ENCODE measurements at regions of chr1 and their contacts with region 1.

Region 1: DNA sequence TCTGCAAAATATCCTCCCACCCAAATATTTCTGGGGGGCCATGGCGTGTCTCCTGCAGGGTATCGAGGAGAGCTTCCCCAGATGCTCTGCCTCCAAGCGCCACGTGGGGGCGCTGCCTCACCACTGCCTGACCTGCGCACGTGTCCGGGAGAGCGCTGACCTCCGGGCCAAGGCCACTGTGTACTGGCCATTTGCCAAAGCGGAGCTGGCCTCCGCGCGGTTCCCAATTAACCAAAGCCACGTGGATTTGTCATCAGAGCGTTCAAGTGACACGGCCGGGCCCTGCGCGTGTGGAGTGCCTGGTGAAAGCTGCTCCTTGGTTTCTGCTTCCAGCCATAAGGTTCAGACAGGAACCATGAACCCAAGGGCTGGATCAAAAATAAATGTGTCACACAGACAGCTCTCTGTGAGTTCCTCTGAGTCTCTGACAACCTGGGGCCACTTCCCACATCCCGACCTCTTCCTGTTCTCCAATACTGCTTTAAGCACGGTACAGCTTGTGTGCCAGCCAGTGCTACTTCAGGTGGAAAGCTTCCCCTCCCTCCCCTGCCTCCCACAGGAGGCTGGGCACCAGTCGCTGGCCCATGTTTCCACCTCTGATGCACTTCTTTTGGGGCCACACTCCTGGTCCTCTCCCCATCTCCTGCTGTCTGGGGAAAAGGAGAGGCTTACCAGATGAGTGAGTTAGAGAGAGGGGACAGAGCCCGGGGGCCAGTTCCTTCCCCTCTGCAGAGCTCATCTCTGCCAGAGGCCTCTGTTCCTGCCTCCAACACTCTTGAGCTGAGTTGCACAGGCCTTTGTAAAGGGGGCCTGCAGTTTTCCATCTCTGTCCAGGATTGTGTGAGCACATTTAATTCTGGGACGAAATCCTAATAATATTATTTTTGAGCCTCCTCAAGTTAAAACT is 26.1 kb downstream of the ZP4 start:
- DNase-seq: peak; percentile 77
- H3K4me3 Mint-ChIP-seq: peak overlapping the region; percentile 66
- H3K27ac Mint-ChIP-seq: peak overlapping the region; percentile 16
- H3K4me1 Mint-ChIP-seq: peaks cover 9% of the 10 kb centered on the region
- H3K27me3 Mint-ChIP-seq: no peaks in the 10 kb centered on the region
- CTCF ChIP-seq: peak; percentile 100

Region 2: DNA sequence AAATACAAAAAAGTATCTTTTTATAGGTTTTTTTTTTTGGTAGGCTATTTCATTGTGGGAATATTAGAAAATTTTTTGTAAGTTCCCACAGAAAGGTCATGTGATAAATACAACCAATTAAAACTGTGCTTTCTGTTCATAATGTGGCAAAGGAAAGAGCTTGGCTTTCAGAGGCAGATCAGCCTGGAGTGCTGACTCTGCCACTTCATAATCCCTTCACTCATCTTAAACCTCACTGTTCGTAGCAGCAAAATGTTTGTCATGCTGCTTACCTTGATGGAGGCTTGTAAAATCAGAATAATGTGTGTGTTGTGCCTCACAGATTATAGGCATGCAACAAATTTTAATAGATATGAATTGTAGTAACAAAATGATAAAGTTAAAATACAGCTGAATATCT is 150.7 kb before region 1 on chr1:
- CTCF ChIA-PET with region 1: no interaction called
- POLR2A ChIA-PET with region 1: no interaction called
- intact Hi-C with region 1: no loop called
- DNase-seq: peak; percentile 17
- H3K4me3 Mint-ChIP-seq: no peak overlapping the region
- H3K27ac Mint-ChIP-seq: no peak overlapping the region
- H3K4me1 Mint-ChIP-seq: peaks cover 5% of the 10 kb centered on the region
- H3K27me3 Mint-ChIP-seq: no peaks in the 10 kb centered on the region
- CTCF ChIP-seq: no peak

Region 3: DNA sequence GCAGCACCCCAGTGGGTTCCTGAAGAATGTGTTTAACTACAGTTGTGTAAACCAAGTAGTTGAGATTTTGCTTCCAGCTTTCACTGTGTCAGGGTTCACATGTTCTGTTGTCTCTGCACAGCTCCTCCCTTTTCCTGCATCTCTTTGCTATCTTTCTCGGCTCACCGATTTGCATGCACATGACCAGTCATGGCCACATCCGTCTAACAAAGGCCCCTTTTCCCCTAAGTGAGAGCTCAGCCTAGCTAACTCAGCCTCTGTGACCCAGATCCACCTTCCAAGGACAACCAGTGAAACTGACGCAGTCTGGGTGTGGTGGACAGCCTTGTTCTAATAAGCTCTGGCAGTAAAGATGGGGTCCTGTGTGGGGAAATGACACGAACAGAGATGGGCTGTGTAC is 75.0 kb before region 1 on chr1:
- CTCF ChIA-PET with region 1: no interaction called
- POLR2A ChIA-PET with region 1: no interaction called
- intact Hi-C with region 1: no loop called
- DNase-seq: no peak
- H3K4me3 Mint-ChIP-seq: no peak overlapping the region
- H3K27ac Mint-ChIP-seq: no peak overlapping the region
- H3K4me1 Mint-ChIP-seq: no peaks in the 10 kb centered on the region
- H3K27me3 Mint-ChIP-seq: no peaks in the 10 kb centered on the region
- CTCF ChIP-seq: no peak

Region 4: DNA sequence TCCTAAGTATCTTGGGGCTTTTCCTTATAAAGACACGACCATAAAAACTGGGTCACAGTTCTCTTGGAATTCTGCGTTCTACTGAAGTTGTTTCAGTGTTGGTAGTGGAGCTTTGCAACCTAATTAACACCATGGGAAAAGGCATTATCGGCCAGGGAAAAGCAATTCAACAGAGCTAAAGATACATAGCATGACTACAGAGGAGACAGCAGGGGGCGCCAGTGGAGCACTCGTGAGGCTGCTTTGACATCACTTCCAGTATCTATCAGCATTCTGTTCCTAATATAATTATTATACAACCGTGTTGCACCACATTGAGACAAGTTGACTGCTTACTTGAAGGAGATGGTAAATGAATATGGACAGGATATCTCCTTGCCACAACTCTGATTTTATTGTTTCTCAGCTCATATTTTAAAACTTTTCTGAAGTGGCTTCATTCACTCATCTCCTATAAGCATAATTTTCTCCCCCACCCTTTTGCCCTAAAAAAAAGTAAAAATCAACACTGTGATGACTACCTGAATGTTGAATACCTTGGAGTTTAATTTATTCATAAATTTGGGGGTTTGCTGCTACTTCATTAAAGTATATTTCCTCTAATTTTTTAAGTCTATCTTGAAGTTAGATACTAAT is 13.3 kb before region 1 on chr1:
- CTCF ChIA-PET with region 1: interaction called, 162 read pairs
- POLR2A ChIA-PET with region 1: interaction called, 3 read pairs
- intact Hi-C with region 1: no loop called
- DNase-seq: peak; percentile 87
- H3K4me3 Mint-ChIP-seq: no peak overlapping the region
- H3K27ac Mint-ChIP-seq: no peak overlapping the region
- H3K4me1 Mint-ChIP-seq: no peaks in the 10 kb centered on the region
- H3K27me3 Mint-ChIP-seq: no peaks in the 10 kb centered on the region
- CTCF ChIP-seq: peak; percentile 97

Region 5: GRCh38 chr1:237911911-237912310 is 47.3 kb after region 1 on chr1:
- CTCF ChIA-PET with region 1: interaction called, 13 read pairs
- POLR2A ChIA-PET with region 1: no interaction called
- intact Hi-C with region 1: no loop called
- DNase-seq: no peak
- H3K4me3 Mint-ChIP-seq: no peak overlapping the region
- H3K27ac Mint-ChIP-seq: no peak overlapping the region
- H3K4me1 Mint-ChIP-seq: no peaks in the 10 kb centered on the region
- H3K27me3 Mint-ChIP-seq: no peaks in the 10 kb centered on the region
- CTCF ChIP-seq: no peak

Region 6: GRCh38 chr1:238052496-238053266 is 188.1 kb after region 1 on chr1:
- CTCF ChIA-PET with region 1: interaction called, 17 read pairs
- POLR2A ChIA-PET with region 1: no interaction called
- intact Hi-C with region 1: no loop called
- DNase-seq: peak; percentile 92
- H3K4me3 Mint-ChIP-seq: no peak overlapping the region
- H3K27ac Mint-ChIP-seq: peak overlapping the region; percentile 67
- H3K4me1 Mint-ChIP-seq: no peaks in the 10 kb centered on the region
- H3K27me3 Mint-ChIP-seq: no peaks in the 10 kb centered on the region
- CTCF ChIP-seq: no peak

Region 7: GRCh38 chr1:238232084-238232710 is 367.6 kb after region 1 on chr1:
- CTCF ChIA-PET with region 1: interaction called, 29 read pairs
- POLR2A ChIA-PET with region 1: no interaction called
- intact Hi-C with region 1: loop called (anchors 1 kb)
- DNase-seq: no peak
- H3K4me3 Mint-ChIP-seq: no peak overlapping the region
- H3K27ac Mint-ChIP-seq: no peak overlapping the region
- H3K4me1 Mint-ChIP-seq: no peaks in the 10 kb centered on the region
- H3K27me3 Mint-ChIP-seq: no peaks in the 10 kb centered on the region
- CTCF ChIP-seq: no peak

Region 8: DNA sequence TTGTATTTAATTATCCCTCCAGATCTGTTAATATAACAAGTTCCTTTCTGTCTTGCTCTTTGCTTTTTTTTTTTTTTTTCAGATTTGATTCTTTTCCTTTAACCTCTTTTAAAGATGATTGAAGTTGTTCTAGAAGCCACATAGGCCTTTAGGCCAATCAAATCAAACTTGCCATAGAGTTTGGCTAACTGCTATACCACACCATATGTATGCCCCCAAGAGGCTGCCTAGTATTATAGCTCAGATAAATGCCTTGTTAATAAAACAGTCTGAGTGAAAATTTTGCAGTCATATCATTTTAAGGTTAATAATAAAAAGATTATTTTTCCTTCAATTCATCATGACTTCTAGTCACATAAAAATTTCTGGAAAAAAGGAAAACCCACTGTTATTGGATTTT is 825.8 kb after region 1 on chr1:
- CTCF ChIA-PET with region 1: interaction called, 5 read pairs
- POLR2A ChIA-PET with region 1: interaction called, 3 read pairs
- intact Hi-C with region 1: loop called (anchors 1 kb)
- DNase-seq: peak; percentile 61
- H3K4me3 Mint-ChIP-seq: no peak overlapping the region
- H3K27ac Mint-ChIP-seq: no peak overlapping the region
- H3K4me1 Mint-ChIP-seq: no peaks in the 10 kb centered on the region
- H3K27me3 Mint-ChIP-seq: no peaks in the 10 kb centered on the region
- CTCF ChIP-seq: peak; percentile 25

Measured in MCF 10A (cell line).